GM23248 (cell line): ENCODE measurements at regions of chr6 and their contacts with region 1.

Region 1: GRCh38 chr6:123316733-123317323 is 319.9 kb downstream of the TRDN start:
- DNase-seq: peak; percentile 39
- H3K4me3 ChIP-seq: no peak overlapping the region
- H3K27ac ChIP-seq: no peak overlapping the region
- H3K4me1 ChIP-seq: no peaks in the 10 kb centered on the region
- H3K27me3 ChIP-seq: no peaks in the 10 kb centered on the region

Region 2: DNA sequence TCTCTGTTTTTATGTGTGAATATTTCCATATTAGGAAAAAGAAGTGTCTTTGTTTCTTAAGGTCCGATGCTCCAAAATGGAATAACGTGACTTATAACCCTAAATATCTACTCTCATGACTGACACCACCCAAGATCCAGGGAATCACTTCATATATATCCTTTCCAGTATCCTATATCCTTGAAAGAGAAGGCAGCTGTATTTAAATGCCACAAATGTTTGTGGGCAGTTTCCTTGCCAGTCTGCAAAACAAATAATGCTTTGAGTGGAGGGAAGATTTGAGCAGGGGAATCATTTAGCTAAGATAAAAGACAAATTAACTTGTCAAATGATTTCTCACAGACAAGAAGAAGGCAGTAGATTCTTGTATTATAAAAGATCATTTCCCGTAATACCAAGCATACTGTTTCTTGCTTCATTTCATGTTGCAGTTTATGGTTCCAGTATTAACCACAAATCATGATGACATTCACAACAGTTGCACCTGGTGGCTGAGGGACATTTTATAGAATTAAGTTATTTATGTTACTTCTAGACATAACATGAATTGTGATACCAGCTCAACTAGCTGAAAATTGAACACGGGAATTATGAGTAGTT is 567.3 kb before region 1 on chr6:
- in situ Hi-C with region 1: loop called (anchors 10 kb)
- DNase-seq: no peak
- H3K4me3 ChIP-seq: no peak overlapping the region
- H3K27ac ChIP-seq: no peak overlapping the region
- H3K4me1 ChIP-seq: no peaks in the 10 kb centered on the region
- H3K27me3 ChIP-seq: no peaks in the 10 kb centered on the region; the same call in 1 of the 2 replicates

Region 3: GRCh38 chr6:122869437-122870024 is 447.3 kb before region 1 on chr6:
- in situ Hi-C with region 1: loop called (anchors 10 kb)
- DNase-seq: peak; percentile 75
- H3K4me3 ChIP-seq: no peak overlapping the region
- H3K27ac ChIP-seq: no peak overlapping the region
- H3K4me1 ChIP-seq: no peaks in the 10 kb centered on the region
- H3K27me3 ChIP-seq: no peaks in the 10 kb centered on the region

Region 4: GRCh38 chr6:122930252-122931180 is 386.3 kb before region 1 on chr6:
- in situ Hi-C with region 1: no loop called
- DNase-seq: no peak
- H3K4me3 ChIP-seq: no peak overlapping the region
- H3K27ac ChIP-seq: no peak overlapping the region
- H3K4me1 ChIP-seq: no peaks in the 10 kb centered on the region
- H3K27me3 ChIP-seq: no peaks in the 10 kb centered on the region